GM12878 (cell line): ENCODE measurements at regions of chr5 and their contacts with region 1.

Region 1: GRCh38 chr5:56200856-56201666 is 32.1 kb downstream of the ANKRD55 start:
- DNase-seq: peak; percentile 90
- ATAC-seq: peak; percentile 100
- H3K4me3 ChIP-seq: no peak overlapping the region
- H3K27ac ChIP-seq: no peak overlapping the region
- H3K4me1 ChIP-seq: no peaks in the 10 kb centered on the region
- H3K27me3 ChIP-seq: no peaks in the 10 kb centered on the region
- CTCF ChIP-seq: peak; percentile 74 to 93 (median 78); a peak in 5 of 6 replicates
- EP300 ChIP-seq: no peak
- POLR2A ChIP-seq: no peak
- RAD21 ChIP-seq: peak; percentile 95

Region 2: DNA sequence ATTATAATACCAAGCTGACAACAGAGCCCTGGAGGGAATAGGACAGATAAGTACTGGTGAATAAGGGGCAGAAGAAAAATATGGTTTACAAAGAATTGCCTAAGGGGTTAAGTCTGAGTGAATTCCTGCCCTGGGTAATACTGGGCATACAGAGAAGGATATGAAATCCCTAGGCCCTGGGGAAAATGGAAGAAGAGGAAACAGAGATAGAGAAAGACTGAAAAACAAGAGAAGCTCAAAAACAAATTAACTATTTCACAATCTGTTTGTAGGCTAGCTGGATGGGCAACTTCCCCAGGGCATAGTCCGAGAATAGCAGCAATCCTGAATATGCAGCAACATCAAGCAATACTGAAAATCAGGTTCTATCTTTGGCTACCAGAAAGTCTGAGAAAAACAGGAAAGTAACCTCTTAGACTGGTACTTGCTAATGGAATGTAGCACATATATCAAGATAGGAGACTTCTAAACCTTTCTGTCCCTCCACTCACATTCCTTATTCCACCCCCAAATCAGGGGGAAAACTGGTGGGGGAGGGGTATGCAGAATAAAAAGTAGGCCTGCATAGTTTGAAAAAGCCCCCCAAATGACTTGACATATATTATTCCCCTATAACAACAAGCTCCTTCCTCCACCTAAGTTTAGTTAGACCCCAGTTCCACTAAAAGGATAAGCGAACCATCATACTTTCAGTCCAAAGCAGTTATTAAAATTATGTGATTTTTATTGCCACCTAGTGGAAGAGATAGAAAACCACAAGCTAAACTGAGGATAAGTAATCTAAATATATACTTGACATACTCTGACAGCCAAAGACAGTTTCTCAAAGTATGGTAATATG is 509.6 kb before region 1 on chr5:
- CTCF ChIA-PET with region 1: interaction called, 5 read pairs
- POLR2A ChIA-PET with region 1: no interaction called
- RAD21 ChIA-PET with region 1: interaction called, 4 read pairs
- SMC1A ChIA-PET with region 1: no interaction called
- in situ Hi-C with region 1: no loop called
- intact Hi-C with region 1: loop called (anchors 5 kb)
- DNase-seq: no peak
- ATAC-seq: peak; percentile 67
- H3K4me3 ChIP-seq: no peak overlapping the region
- H3K27ac ChIP-seq: no peak overlapping the region
- H3K4me1 ChIP-seq: no peaks in the 10 kb centered on the region
- H3K27me3 ChIP-seq: no peaks in the 10 kb centered on the region
- CTCF ChIP-seq: peak; percentile 26 to 50 (median 40); a peak in 4 of 6 replicates
- EP300 ChIP-seq: no peak
- POLR2A ChIP-seq: no peak
- RAD21 ChIP-seq: peak; percentile 58

Region 3: DNA sequence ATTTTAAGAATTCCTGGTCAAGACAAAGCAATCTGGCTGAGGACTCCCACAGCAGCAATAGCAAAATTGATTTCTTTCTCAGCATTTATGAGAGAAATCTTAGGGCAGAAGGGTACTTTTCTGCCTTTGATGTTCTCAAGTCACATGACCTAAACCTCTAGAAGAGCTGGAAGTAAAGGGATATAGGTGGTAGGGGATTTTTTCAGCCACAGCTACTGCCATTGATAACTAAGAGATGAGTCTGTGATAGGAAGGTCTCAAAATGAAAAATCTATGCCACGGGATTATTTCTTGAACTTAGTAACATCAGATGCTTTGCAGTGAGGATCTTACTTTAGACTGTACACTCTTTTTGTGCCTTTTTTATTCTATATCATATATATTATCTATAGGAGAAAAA is 241.9 kb before region 1 on chr5:
- CTCF ChIA-PET with region 1: interaction called, 11 read pairs
- POLR2A ChIA-PET with region 1: no interaction called
- RAD21 ChIA-PET with region 1: no interaction called
- SMC1A ChIA-PET with region 1: interaction called, 10 read pairs
- in situ Hi-C with region 1: no loop called
- intact Hi-C with region 1: no loop called
- DNase-seq: no peak
- ATAC-seq: peak; percentile 26
- H3K4me3 ChIP-seq: no peak overlapping the region
- H3K27ac ChIP-seq: no peak overlapping the region
- H3K4me1 ChIP-seq: no peaks in the 10 kb centered on the region
- H3K27me3 ChIP-seq: no peaks in the 10 kb centered on the region
- CTCF ChIP-seq: no peak
- EP300 ChIP-seq: no peak
- POLR2A ChIP-seq: no peak
- RAD21 ChIP-seq: no peak

Region 4: DNA sequence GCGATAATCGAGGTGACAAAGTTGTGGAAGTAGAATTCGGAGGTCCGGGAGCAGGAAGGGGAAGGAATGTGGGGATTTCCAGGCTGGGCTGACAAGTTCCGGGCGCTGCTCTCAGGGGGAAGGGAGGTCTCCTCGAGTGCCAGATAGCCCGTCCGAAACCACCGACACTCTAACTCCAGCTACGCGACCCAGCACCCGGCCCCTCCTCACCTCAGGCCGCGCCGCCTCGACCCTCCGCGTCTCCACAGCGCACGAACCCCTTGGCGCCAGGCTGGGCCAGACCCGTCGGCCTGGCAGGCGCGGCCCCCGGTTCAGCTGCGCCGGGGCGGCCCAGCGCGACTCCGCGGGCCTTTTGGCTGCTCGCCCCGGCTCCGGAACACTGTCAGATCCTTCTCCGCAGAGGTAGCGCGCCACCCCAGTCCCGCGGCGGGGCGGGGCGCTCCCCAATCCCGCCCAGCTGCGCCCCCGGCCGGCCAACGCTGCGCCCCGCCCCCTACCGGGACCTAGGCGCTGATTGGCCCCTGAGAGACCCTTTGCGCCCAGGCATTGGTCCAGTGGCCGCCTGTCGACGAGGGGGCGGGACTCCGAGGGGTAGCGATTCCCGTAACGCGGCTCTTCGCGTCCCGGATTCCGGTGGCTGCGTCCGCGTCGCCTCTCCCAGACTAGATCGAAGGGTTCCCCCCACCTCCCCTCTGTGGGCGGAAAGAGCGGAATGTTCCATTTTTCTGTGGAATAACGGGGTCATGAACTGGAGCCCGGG is 206.3 kb before region 1 on chr5 and contains the start of gene IL6ST:
- CTCF ChIA-PET with region 1: interaction called, 13 read pairs
- POLR2A ChIA-PET with region 1: no interaction called
- RAD21 ChIA-PET with region 1: interaction called, 29 read pairs
- SMC1A ChIA-PET with region 1: interaction called, 17 read pairs
- in situ Hi-C with region 1: no loop called
- intact Hi-C with region 1: no loop called
- DNase-seq: peak; percentile 78
- ATAC-seq: peak; percentile 91
- H3K4me3 ChIP-seq: peak within 1 kb of the TSS; percentile 93
- H3K27ac ChIP-seq: peak within 1 kb of the TSS; percentile 93
- H3K4me1 ChIP-seq: no peaks in the 10 kb centered on the region; the same call in none of the 2 replicates
- H3K27me3 ChIP-seq: no peaks in the 10 kb centered on the region
- CTCF ChIP-seq: peak in 1 of 3 experiments; percentile 19; a peak in 1 of 6 replicates
- EP300 ChIP-seq: no peak
- POLR2A ChIP-seq: peak; percentile 88
- RAD21 ChIP-seq: no peak
- polyA plus RNA-seq, gene IL6ST: 1.5 to 1.8 TPM

Region 5: GRCh38 chr5:56080375-56081052 is 120.5 kb before region 1 on chr5:
- CTCF ChIA-PET with region 1: interaction called, 10 read pairs
- POLR2A ChIA-PET with region 1: no interaction called
- RAD21 ChIA-PET with region 1: interaction called, 14 read pairs
- SMC1A ChIA-PET with region 1: interaction called, 10 read pairs
- in situ Hi-C with region 1: no loop called
- intact Hi-C with region 1: loop called (anchors 1 kb)
- DNase-seq: peak; percentile 98
- ATAC-seq: peak; percentile 82
- H3K4me3 ChIP-seq: no peak overlapping the region
- H3K27ac ChIP-seq: peak overlapping the region; percentile 84
- H3K4me1 ChIP-seq: peaks cover 21% of the 10 kb centered on the region
- H3K27me3 ChIP-seq: no peaks in the 10 kb centered on the region
- CTCF ChIP-seq: no peak
- EP300 ChIP-seq: peak; percentile 83 to 87
- POLR2A ChIP-seq: no peak
- RAD21 ChIP-seq: no peak

Region 6: DNA sequence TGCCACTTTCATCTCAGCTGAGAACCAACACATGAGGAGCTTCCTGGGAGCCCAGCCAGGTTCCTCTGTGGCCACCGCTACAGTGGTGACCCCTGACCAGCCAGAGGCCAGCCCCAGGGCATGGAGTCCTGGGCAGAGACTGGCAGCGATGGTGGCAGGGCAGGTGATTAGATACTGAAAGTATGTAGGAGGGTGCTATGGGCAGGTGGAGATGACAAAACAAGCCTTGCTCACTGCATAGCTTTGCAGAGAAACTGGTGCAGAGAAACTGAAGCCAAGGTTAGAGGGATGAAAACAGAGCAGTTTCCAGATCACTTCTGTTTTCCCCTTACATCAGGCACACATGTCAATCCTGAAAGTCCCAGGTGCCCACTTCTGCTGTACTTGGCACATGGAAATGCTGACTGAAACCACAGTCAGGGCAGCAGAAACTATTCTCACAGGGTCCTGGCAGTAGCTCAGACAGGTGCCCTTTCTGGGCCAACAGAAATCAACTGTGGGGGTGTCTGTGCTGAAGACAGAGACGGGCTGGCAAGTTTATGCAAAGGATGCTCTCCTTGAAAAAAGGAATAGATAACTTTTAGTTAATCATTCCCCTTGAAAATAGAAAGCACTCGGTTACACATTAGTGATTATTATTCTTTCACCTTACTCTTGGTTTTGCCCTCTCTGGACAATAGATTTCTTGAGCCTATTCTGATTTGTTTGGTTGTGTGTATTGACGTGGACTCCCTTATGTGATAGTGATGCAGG is 58.3 kb before region 1 on chr5:
- CTCF ChIA-PET with region 1: interaction called, 25 read pairs
- POLR2A ChIA-PET with region 1: no interaction called
- RAD21 ChIA-PET with region 1: interaction called, 41 read pairs
- SMC1A ChIA-PET with region 1: interaction called, 28 read pairs
- in situ Hi-C with region 1: no loop called
- intact Hi-C with region 1: no loop called
- DNase-seq: peak; percentile 95
- ATAC-seq: peak; percentile 85
- H3K4me3 ChIP-seq: no peak overlapping the region
- H3K27ac ChIP-seq: peak overlapping the region; percentile 19; the same call in 1 of the 2 replicates
- H3K4me1 ChIP-seq: peaks cover 25% of the 10 kb centered on the region
- H3K27me3 ChIP-seq: no peaks in the 10 kb centered on the region; a peak in 1 of 4 replicates
- CTCF ChIP-seq: no peak
- EP300 ChIP-seq: peak; percentile 60 to 80; a peak in 3 of 4 replicates
- POLR2A ChIP-seq: no peak
- RAD21 ChIP-seq: no peak

Region 7: GRCh38 chr5:56190497-56190896 is 10.6 kb before region 1 on chr5:
- CTCF ChIA-PET with region 1: interaction called, 8 read pairs
- POLR2A ChIA-PET with region 1: interaction called, 4 read pairs
- RAD21 ChIA-PET with region 1: interaction called, 4 read pairs
- SMC1A ChIA-PET with region 1: interaction called, 10 read pairs
- in situ Hi-C with region 1: no loop called
- intact Hi-C with region 1: no loop called
- DNase-seq: no peak
- ATAC-seq: no peak
- H3K4me3 ChIP-seq: no peak overlapping the region
- H3K27ac ChIP-seq: no peak overlapping the region
- H3K4me1 ChIP-seq: no peaks in the 10 kb centered on the region
- H3K27me3 ChIP-seq: no peaks in the 10 kb centered on the region
- CTCF ChIP-seq: no peak
- EP300 ChIP-seq: no peak
- POLR2A ChIP-seq: no peak
- RAD21 ChIP-seq: no peak

Region 8: DNA sequence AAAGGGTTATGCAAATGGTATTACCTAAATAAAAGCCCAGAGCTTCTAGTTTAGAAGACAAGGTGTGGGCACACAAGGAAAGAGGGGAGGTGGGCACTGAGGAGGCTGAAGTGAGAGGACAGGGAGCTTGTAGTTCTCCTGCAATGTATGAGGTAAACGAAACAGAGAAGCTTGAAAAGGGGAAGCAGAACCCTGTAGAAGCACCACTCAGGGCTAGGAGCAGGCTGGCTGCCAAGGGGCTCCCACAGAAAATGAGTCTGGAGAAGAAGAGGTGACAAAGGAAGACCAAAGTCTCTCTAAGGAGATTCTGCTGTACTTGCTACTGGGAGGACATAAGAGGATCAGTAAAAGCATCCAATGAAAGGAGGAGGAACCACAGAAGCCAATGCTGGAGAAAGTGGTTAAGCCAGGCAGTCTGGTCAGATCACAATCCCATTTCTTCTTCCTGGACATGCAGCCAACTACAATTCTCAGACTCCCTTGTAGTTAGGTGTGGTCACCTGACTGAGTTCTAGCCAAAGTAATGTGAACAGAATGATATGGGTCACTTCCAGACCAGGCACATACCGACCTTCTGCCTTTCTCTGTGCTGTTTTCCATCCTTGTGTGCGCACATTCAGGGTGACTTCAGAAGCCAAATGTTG is 439.8 kb after region 1 on chr5:
- CTCF ChIA-PET with region 1: no interaction called
- POLR2A ChIA-PET with region 1: no interaction called
- RAD21 ChIA-PET with region 1: no interaction called
- SMC1A ChIA-PET with region 1: no interaction called
- in situ Hi-C with region 1: no loop called
- intact Hi-C with region 1: no loop called
- DNase-seq: no peak
- ATAC-seq: peak; percentile 98
- H3K4me3 ChIP-seq: no peak overlapping the region
- H3K27ac ChIP-seq: no peak overlapping the region
- H3K4me1 ChIP-seq: peaks cover 7% of the 10 kb centered on the region
- H3K27me3 ChIP-seq: peaks cover 0 to 3% of the 10 kb centered on the region in 2 experiments; a peak in 3 of 4 replicates
- CTCF ChIP-seq: no peak
- EP300 ChIP-seq: no peak
- POLR2A ChIP-seq: no peak
- RAD21 ChIP-seq: no peak